ENCODE measurements at regions of chrX and their contacts with region 1.

Region 1: GRCh38 chrX:65750674-65751469 is 83.4 kb downstream of the MSN start:
- DNase-seq: peak; percentile 60
- H3K4me3 Mint-ChIP-seq: peak overlapping the region; percentile 4
- H3K27ac Mint-ChIP-seq: peak overlapping the region; percentile 30
- H3K4me1 Mint-ChIP-seq: peaks cover 56% of the 10 kb centered on the region
- H3K27me3 Mint-ChIP-seq: no peaks in the 10 kb centered on the region

Region 2: GRCh38 chrX:65926095-65927019 is 175.5 kb after region 1 on chrX:
- CTCF ChIA-PET with region 1: no interaction called
- intact Hi-C with region 1: loop called (anchors 5 kb)
- DNase-seq: peak; percentile 61
- H3K4me3 Mint-ChIP-seq: peak overlapping the region; percentile 34
- H3K27ac Mint-ChIP-seq: peak overlapping the region; percentile 69
- H3K4me1 Mint-ChIP-seq: peaks cover 57% of the 10 kb centered on the region
- H3K27me3 Mint-ChIP-seq: no peaks in the 10 kb centered on the region

Region 3: GRCh38 chrX:66015152-66015831 is 264.4 kb after region 1 on chrX:
- CTCF ChIA-PET with region 1: no interaction called
- intact Hi-C with region 1: no loop called
- DNase-seq: no peak
- H3K4me3 Mint-ChIP-seq: no peak overlapping the region
- H3K27ac Mint-ChIP-seq: no peak overlapping the region
- H3K4me1 Mint-ChIP-seq: peaks cover 58% of the 10 kb centered on the region
- H3K27me3 Mint-ChIP-seq: no peaks in the 10 kb centered on the region